Panc1 (cell line): ENCODE measurements at regions of chr2 and their contacts with region 1.

Region 1: GRCh38 chr2:38581193-38582147 is 21.3 kb downstream of the HNRNPLL start:
- DNase-seq: no peak
- ATAC-seq: peak; percentile 92
- H3K4me3 ChIP-seq: no peak overlapping the region
- H3K27ac ChIP-seq: no peak overlapping the region
- H3K4me1 ChIP-seq: peaks cover 15% of the 10 kb centered on the region; the same call in 1 of the 2 replicates
- H3K27me3 ChIP-seq: no peaks in the 10 kb centered on the region
- CTCF ChIP-seq: peak; percentile 79

Region 2: GRCh38 chr2:38709567-38710194 is 128.2 kb after region 1 on chr2:
- CTCF ChIA-PET with region 1: interaction called, 10 read pairs
- POLR2A ChIA-PET with region 1: interaction called, 8 read pairs
- in situ Hi-C with region 1: no loop called
- intact Hi-C with region 1: no loop called
- DNase-seq: no peak
- ATAC-seq: no peak
- H3K4me3 ChIP-seq: no peak overlapping the region
- H3K27ac ChIP-seq: no peak overlapping the region
- H3K4me1 ChIP-seq: peaks cover 6% of the 10 kb centered on the region; the same call in 1 of the 2 replicates
- H3K27me3 ChIP-seq: no peaks in the 10 kb centered on the region
- CTCF ChIP-seq: no peak

Region 3: GRCh38 chr2:38728694-38729093 is 147.2 kb after region 1 on chr2:
- CTCF ChIA-PET with region 1: interaction called, 6 read pairs
- POLR2A ChIA-PET with region 1: no interaction called
- in situ Hi-C with region 1: loop called (anchors 25 kb)
- intact Hi-C with region 1: loop called (anchors 5 kb)
- DNase-seq: no peak
- ATAC-seq: no peak
- H3K4me3 ChIP-seq: no peak overlapping the region
- H3K27ac ChIP-seq: no peak overlapping the region
- H3K4me1 ChIP-seq: no peaks in the 10 kb centered on the region
- H3K27me3 ChIP-seq: no peaks in the 10 kb centered on the region
- CTCF ChIP-seq: no peak

Region 4: GRCh38 chr2:38740851-38741731 is 159.6 kb after region 1 on chr2:
- CTCF ChIA-PET with region 1: interaction called, 6 read pairs
- POLR2A ChIA-PET with region 1: no interaction called
- in situ Hi-C with region 1: loop called (anchors 25 kb)
- intact Hi-C with region 1: no loop called
- DNase-seq: no peak
- ATAC-seq: peak; percentile 69
- H3K4me3 ChIP-seq: no peak overlapping the region
- H3K27ac ChIP-seq: no peak overlapping the region
- H3K4me1 ChIP-seq: peaks cover 22% of the 10 kb centered on the region
- H3K27me3 ChIP-seq: no peaks in the 10 kb centered on the region
- CTCF ChIP-seq: peak; percentile 78

Region 5: DNA sequence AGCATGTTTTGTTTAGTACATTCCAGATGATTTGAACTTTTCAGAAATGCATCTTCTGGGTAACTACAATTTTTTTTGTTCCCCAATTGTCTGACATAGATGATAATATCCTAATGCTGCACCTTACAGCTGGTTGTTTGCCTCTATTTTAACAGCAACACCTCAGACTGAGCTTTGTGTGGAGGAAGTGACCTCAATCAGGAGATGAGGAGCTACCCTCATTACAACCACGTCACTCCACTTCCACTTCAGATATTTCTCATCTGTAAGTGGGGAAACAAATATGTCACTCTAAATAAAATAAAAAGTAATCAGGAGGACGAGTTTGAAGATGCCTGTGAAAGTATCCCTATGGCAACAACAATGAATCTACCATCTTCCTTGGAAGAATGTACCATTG is 181.8 kb after region 1 on chr2:
- CTCF ChIA-PET with region 1: no interaction called
- POLR2A ChIA-PET with region 1: no interaction called
- in situ Hi-C with region 1: no loop called
- intact Hi-C with region 1: no loop called
- DNase-seq: no peak
- ATAC-seq: no peak
- H3K4me3 ChIP-seq: no peak overlapping the region
- H3K27ac ChIP-seq: no peak overlapping the region
- H3K4me1 ChIP-seq: no peaks in the 10 kb centered on the region
- H3K27me3 ChIP-seq: no peaks in the 10 kb centered on the region
- CTCF ChIP-seq: no peak

Region 6: GRCh38 chr2:39039072-39039471 is 457.6 kb after region 1 on chr2:
- CTCF ChIA-PET with region 1: no interaction called
- POLR2A ChIA-PET with region 1: no interaction called
- in situ Hi-C with region 1: no loop called
- intact Hi-C with region 1: no loop called
- DNase-seq: no peak
- ATAC-seq: no peak
- H3K4me3 ChIP-seq: no peak overlapping the region
- H3K27ac ChIP-seq: no peak overlapping the region
- H3K4me1 ChIP-seq: no peaks in the 10 kb centered on the region
- H3K27me3 ChIP-seq: no peaks in the 10 kb centered on the region
- CTCF ChIP-seq: no peak

Region 7: DNA sequence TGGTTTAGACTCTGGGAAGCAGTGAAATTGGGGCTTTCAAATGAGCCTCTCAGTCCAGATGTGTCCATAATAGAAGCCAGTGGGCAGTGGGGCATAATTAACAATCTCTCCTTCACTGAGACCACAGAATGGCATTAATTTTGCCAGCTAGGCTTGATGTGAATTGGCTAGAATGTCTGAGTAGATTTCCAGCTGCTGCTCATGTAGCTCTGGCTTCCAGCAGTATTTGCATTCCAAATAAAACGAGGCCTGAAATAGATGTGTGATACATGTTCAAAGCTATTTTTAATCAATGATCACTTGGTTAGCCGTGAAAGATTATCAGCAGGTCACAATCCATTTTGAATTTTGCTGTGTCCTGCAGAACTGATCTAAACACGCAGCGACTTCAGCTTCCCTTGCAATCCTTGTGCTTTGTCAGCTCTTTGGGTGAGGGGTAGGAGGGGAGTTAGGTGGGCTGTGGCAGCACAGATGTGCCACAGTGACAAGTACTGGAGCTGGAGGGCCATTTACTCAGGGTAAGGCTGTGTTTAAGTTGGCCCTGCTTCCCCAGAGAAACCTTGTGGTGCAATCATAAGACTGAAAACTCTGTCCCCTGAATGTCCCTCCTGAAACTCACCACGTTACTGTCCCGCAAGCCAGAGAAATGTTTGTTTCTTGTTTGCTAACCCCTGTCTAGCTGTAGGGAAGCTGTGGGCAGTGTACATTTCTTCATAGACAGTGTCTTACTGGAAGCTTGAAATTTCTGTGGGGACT is 1027.4 kb after region 1 on chr2:
- CTCF ChIA-PET with region 1: no interaction called
- POLR2A ChIA-PET with region 1: no interaction called
- in situ Hi-C with region 1: no loop called
- intact Hi-C with region 1: no loop called
- DNase-seq: no peak
- ATAC-seq: no peak
- H3K4me3 ChIP-seq: no peak overlapping the region
- H3K27ac ChIP-seq: no peak overlapping the region
- H3K4me1 ChIP-seq: no peaks in the 10 kb centered on the region
- H3K27me3 ChIP-seq: peaks cover 5% of the 10 kb centered on the region; the same call in 1 of the 2 replicates
- CTCF ChIP-seq: no peak